ENCODE measurements at regions of chr1 and their contacts with region 1.

Region 1: DNA sequence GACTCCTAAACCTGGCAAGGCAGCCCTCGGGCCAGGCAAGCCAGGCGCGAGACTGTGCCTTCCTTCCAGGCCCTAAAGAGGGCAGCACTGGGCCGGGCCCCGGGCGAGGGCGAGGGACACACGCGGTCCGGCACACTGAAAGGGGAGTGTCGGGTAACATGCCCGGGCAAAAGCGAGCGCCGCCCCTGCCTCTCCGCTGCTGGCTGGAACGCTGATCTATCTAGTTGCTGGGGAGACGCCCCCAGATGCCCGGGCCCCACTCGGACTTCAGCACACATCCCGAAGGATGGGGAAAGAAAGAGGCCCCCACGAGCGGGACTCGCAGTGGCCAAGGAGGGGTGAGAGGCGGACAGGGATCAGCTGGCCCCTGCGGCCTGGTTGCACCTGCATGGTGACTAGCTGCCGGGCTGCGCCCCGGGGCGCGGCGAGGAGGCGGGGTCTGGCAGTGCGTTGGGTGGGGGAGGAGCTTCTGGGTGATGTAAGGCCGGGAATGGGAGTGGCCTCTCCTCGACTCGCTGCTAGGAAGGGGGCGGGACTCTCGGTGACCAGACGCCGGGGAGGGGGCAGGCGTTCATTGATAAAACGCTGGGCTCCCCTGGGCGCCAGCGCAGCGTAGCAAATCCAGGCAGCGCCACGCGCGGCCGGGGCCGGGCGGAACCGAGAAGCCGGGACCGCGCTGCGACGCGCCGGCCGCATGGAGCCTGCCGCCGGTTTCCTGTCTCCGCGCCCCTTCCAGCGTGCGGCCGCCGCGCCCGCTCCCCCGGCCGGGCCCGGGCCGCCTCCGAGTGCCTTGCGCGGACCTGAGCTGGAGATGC is at the start of gene PLK3:
- DNase-seq: peak; percentile 99
- H3K4me3 Mint-ChIP-seq: peak within 1 kb of the TSS; percentile 86
- H3K27ac Mint-ChIP-seq: peak within 1 kb of the TSS; percentile 99
- H3K4me1 Mint-ChIP-seq: peaks cover 48% of the 10 kb centered on the region
- H3K27me3 Mint-ChIP-seq: no peaks in the 10 kb centered on the region

Region 2: GRCh38 chr1:44631647-44632539 is 168.1 kb before region 1 on chr1:
- CTCF ChIA-PET with region 1: no interaction called
- DNase-seq: peak; percentile 94
- H3K4me3 Mint-ChIP-seq: peak overlapping the region; percentile 84
- H3K27ac Mint-ChIP-seq: peak overlapping the region; percentile 97
- H3K4me1 Mint-ChIP-seq: peaks cover 41% of the 10 kb centered on the region
- H3K27me3 Mint-ChIP-seq: no peaks in the 10 kb centered on the region

Region 3: DNA sequence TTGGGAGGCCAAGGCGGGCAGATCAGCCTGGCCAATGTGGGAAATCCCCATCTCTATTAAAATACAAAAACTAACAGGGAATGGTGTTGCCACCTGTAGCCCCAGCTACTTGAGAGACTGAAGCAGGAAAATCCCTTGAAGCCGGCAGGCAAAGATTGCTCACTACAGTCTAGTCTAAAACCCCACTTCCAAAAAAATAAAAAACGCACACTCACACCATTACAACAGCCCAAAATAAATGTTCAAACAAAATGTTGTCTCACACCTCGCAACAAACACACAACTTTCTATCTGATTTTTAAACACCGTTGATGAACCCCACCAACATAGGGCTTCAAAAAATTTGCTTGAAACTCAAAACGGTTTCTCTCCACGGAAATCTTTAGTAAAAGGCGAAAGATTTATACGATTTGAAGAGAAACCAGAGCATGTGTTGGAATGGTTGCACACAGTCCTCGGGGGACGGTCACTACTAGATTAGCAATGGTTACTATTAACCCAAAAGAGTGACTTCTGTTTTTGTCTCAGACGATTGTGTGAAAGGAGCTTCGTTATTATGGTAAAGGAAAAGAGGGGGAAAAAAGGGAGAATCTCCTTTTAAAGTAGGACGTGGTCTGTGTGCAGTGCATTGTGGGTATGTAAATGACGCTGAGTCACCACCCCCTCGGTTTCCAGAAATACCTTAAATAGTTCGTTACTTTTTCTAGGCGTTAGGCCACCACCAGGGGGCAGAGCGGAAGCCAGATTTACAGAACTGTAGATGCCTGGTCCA is 69.0 kb before region 1 on chr1 and contains the start of gene RNU5D-1:
- CTCF ChIA-PET with region 1: interaction called, 15 read pairs
- DNase-seq: peak; percentile 97
- H3K4me3 Mint-ChIP-seq: peak within 1 kb of the TSS; percentile 54
- H3K27ac Mint-ChIP-seq: peak within 1 kb of the TSS; percentile 99
- H3K4me1 Mint-ChIP-seq: peaks cover 48% of the 10 kb centered on the region
- H3K27me3 Mint-ChIP-seq: no peaks in the 10 kb centered on the region

Region 4: GRCh38 chr1:44812822-44813543 is 13.0 kb after region 1 on chr1:
- CTCF ChIA-PET with region 1: interaction called, 68 read pairs
- DNase-seq: no peak
- H3K4me3 Mint-ChIP-seq: peak overlapping the region; percentile 78
- H3K27ac Mint-ChIP-seq: peak overlapping the region; percentile 99
- H3K4me1 Mint-ChIP-seq: peaks cover 74% of the 10 kb centered on the region
- H3K27me3 Mint-ChIP-seq: no peaks in the 10 kb centered on the region

Region 5: GRCh38 chr1:44819608-44820327 is 19.8 kb after region 1 on chr1:
- CTCF ChIA-PET with region 1: interaction called, 68 read pairs
- DNase-seq: peak; percentile 86
- H3K4me3 Mint-ChIP-seq: peak overlapping the region; percentile 88
- H3K27ac Mint-ChIP-seq: peak overlapping the region; percentile 100
- H3K4me1 Mint-ChIP-seq: peaks cover 58% of the 10 kb centered on the region
- H3K27me3 Mint-ChIP-seq: peaks cover 5% of the 10 kb centered on the region

Region 6: DNA sequence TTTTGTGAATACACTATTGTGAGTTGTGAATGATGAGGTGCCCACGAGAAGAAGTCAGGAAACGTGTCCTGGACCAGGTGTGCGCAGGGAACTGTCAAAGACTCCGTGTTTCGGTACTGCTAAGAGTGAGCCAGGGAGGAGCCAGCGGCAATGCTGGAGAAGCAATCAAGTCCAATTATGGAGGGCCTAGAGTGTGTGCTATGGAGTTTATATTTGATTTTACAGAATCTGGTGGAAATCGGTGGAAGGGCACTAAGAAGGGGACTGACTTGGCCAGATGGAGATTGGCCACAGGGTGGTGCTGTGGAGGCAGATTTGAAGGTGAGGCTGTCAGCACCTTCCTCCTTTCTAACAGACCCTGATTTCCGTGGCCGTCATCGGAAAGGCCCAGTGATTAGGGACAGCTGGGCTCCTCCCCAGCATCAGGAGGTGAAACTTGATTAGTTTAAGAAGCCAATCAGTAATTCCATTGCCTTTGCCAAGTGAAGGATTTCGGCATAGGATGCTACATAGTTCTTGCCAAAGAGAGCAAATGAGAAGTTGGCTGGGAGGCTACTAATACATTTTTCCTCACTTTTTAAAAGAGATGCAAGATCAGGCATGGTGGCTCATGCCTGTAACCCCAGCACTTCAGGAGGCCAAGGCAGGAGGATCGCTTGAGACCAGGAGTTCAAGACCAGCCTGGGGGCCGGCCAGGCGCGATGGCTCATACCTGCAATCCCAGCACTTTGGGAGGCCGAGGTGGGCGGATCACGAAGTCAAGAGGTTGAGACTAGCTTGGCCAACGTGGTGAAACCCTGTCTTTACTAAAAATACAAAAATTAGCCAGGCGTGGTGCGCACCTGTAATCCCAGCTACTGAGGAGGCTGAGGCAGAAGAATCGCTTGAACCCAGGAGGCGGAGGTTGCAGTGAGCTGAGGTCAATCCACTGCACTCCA is 36.0 kb after region 1 on chr1:
- CTCF ChIA-PET with region 1: interaction called, 11 read pairs
- DNase-seq: peak; percentile 94
- H3K4me3 Mint-ChIP-seq: no peak overlapping the region
- H3K27ac Mint-ChIP-seq: no peak overlapping the region
- H3K4me1 Mint-ChIP-seq: peaks cover 10% of the 10 kb centered on the region
- H3K27me3 Mint-ChIP-seq: peaks cover 8% of the 10 kb centered on the region

Region 7: GRCh38 chr1:45152126-45152525 is 352.1 kb after region 1 on chr1:
- CTCF ChIA-PET with region 1: no interaction called
- DNase-seq: no peak
- H3K4me3 Mint-ChIP-seq: no peak overlapping the region
- H3K27ac Mint-ChIP-seq: no peak overlapping the region
- H3K4me1 Mint-ChIP-seq: no peaks in the 10 kb centered on the region
- H3K27me3 Mint-ChIP-seq: no peaks in the 10 kb centered on the region